ENCODE measurements at regions of chr6 and their contacts with region 1.

Region 1: GRCh38 chr6:25992413-25993037 is 29.9 kb downstream of the TRIM38 start:
- DNase-seq: peak; percentile 82 to 99
- H3K4me3 ChIP-seq: peak overlapping the region; percentile 45 to 81 (median 68)
- H3K27ac ChIP-seq: no peak overlapping the region
- H3K4me1 ChIP-seq: peaks cover 0 to 8% (median 5%) of the 10 kb centered on the region in 4 experiments; a peak in 4 of 7 replicates
- H3K27me3 ChIP-seq: no peaks in the 10 kb centered on the region
- CTCF ChIP-seq: peak; percentile 91 to 99 (median 91)
- EP300 ChIP-seq: peak in 1 of 2 experiments; percentile 69; a peak in 1 of 3 replicates
- POLR2A ChIP-seq: peak; percentile 33 to 74
- RAD21 ChIP-seq: peak; percentile 57 to 77

Region 2: GRCh38 chr6:25962149-25963127 is 30.1 kb before region 1 on chr6 and contains the start of gene TRIM38:
- CTCF ChIA-PET with region 1: interaction called, 12 read pairs
- POLR2A ChIA-PET with region 1: interaction called, 3 read pairs
- DNase-seq: no peak
- H3K4me3 ChIP-seq: peak within 1 kb of the TSS; percentile 38 to 51 (median 42); a peak in 7 of 8 replicates
- H3K27ac ChIP-seq: no peak within 1 kb of the TSS
- H3K4me1 ChIP-seq: peaks cover 9 to 24% (median 21%) of the 10 kb centered on the region in 4 experiments
- H3K27me3 ChIP-seq: peaks cover 0 to 2% (median 0%) of the 10 kb centered on the region in 4 experiments; a peak in 4 of 7 replicates
- CTCF ChIP-seq: no peak
- EP300 ChIP-seq: no peak
- POLR2A ChIP-seq: no peak
- RAD21 ChIP-seq: no peak
- total RNA-seq, gene TRIM38: 0.27 and 0.43 TPM in 2 replicates

Region 3: GRCh38 chr6:25981568-25982263 is 10.8 kb before region 1 on chr6:
- CTCF ChIA-PET with region 1: interaction called, 10 read pairs
- POLR2A ChIA-PET with region 1: interaction called, 4 read pairs
- DNase-seq: no peak
- H3K4me3 ChIP-seq: no peak overlapping the region
- H3K27ac ChIP-seq: no peak overlapping the region
- H3K4me1 ChIP-seq: no peaks in the 10 kb centered on the region; a peak in 1 of 7 replicates
- H3K27me3 ChIP-seq: no peaks in the 10 kb centered on the region
- CTCF ChIP-seq: no peak
- EP300 ChIP-seq: no peak
- POLR2A ChIP-seq: no peak
- RAD21 ChIP-seq: no peak

Region 4: GRCh38 chr6:26020329-26021000 is 27.9 kb after region 1 on chr6:
- CTCF ChIA-PET with region 1: interaction called, 11 read pairs
- POLR2A ChIA-PET with region 1: interaction called, 36 read pairs
- DNase-seq: no peak
- H3K4me3 ChIP-seq: peak overlapping the region; percentile 69 to 94 (median 74)
- H3K27ac ChIP-seq: peak overlapping the region; percentile 95
- H3K4me1 ChIP-seq: peaks cover 2 to 14% (median 5%) of the 10 kb centered on the region in 4 experiments; a peak in 4 of 7 replicates
- H3K27me3 ChIP-seq: no peaks in the 10 kb centered on the region
- CTCF ChIP-seq: no peak
- EP300 ChIP-seq: no peak
- POLR2A ChIP-seq: peak; percentile 100
- RAD21 ChIP-seq: no peak; a peak in 1 of 4 replicates

Measured in H1 (cell line).